Activated T-helper 1 cell treated with anti-CD3 and anti-CD28 coated beads, Interleukin-12 subunit alpha, Interleukin-12 subunit beta, Interleukin-2, Interleukin-4 antibody, amounts not matched to agents 30 ng/mL and 10 ng/mL and 1 ng/mL, durations not matched to agents 14 hours and 24 hours and 36 hours (primary cell): ENCODE measurements at regions of chr20 and their contacts with region 1.

Region 1: DNA sequence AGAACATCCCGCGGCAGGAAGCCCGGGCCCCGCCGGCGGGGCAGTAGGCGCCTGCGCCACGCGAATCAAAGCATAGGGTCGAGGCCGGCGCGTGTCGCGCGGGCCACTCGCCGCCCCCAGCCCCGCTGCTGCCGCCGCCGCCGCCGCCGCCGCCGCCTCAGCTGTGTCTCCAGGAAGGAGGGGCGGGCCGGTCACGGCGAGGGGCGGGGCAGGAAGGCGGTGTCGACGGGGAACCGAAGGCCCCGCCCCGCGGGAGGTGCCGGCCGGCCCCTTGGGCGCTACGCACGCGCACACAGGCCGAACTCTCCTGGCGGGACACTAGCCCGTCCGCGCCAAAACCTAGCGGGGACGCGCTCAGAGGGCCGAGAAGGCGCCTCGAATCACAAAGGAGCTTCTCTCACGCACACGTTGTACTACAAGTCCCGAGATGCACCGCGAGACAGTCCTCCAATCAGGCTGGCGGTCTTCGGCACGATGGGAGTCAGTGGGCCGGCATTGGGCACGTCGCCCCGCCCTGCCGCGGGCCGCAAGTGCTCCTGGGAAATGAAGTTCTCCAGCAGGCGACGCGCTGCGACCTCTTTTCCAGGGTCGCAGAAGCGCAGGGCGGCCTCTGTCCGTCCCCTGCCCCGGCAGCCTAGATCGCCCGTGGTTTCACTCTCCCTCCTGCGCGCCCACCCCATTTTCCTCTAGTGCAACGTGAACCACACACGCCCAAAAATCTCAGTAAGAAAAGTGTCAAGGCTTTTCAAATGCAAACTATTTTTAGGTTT is at the start of gene RALGAPA2:
- DNase-seq: peak; percentile 91
- H3K4me3 Mint-ChIP-seq: peak within 1 kb of the TSS; percentile 95
- H3K27ac Mint-ChIP-seq: peak within 1 kb of the TSS; percentile 89
- H3K4me1 Mint-ChIP-seq: peaks cover 33% of the 10 kb centered on the region
- H3K27me3 Mint-ChIP-seq: no peaks in the 10 kb centered on the region
- total RNA-seq, gene RALGAPA2: 18.0 and 19.6 TPM in 2 replicates

Region 2: DNA sequence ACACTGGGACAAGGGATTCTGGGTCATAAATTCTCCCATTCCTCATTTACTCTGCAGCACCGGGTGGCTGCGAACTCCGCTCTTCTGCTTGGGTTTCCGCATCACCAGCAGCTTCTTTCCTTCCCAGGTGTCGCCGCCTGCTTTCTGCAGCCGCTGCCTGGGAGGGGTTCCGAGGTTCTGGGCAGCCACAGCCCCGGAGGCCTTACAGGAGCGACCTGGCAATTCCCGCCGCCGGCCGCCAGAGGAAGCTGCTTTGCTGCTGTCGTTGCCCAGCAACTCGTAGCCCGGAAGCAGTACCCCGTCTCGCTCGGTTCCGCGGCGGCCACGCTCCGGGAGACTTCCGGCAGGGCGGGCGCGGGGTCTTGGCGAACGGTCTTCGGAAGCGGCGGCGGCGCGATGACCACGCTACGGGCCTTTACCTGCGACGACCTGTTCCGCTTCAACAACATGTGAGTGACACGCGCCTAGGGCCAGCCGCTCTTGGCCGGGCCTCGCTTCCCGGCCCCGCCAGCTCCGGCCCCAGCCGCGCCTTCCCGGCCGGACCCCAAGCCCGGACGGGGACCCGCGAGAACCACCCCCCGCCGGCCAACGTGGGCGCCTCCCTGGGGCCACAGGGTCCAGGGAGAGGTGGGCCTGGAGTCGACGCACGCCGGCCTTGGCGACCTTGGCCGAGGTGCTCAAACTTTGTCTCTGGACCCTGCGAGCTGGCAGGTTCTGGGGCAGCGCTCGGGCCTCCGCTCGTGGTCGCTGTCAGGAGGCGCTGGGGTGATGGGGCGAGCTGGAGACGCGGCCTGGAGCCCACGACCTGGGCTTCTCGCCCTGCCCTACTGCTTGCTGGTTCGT is 695.4 kb before region 1 on chr20 and contains the start of gene NAA20:
- intact Hi-C with region 1: loop called (anchors 2 kb)
- DNase-seq: peak; percentile 88
- H3K4me3 Mint-ChIP-seq: peak within 1 kb of the TSS; percentile 90
- H3K27ac Mint-ChIP-seq: peak within 1 kb of the TSS; percentile 86
- H3K4me1 Mint-ChIP-seq: peaks cover 44% of the 10 kb centered on the region
- H3K27me3 Mint-ChIP-seq: no peaks in the 10 kb centered on the region
- total RNA-seq, gene NAA20: 86.3 and 89.9 TPM in 2 replicates

Region 3: GRCh38 chr20:20052074-20052970 is 660.3 kb before region 1 on chr20 and contains the starts of genes CFAP61 and CRNKL1:
- intact Hi-C with region 1: loop called (anchors 1 kb)
- DNase-seq: peak; percentile 95
- H3K4me3 Mint-ChIP-seq: peak within 1 kb of the TSS; percentile 97
- H3K27ac Mint-ChIP-seq: peak within 1 kb of the TSS; percentile 96
- H3K4me1 Mint-ChIP-seq: peaks cover 13% of the 10 kb centered on the region
- H3K27me3 Mint-ChIP-seq: peaks cover 6% of the 10 kb centered on the region
- total RNA-seq, gene CFAP61: not detected in 2 replicates
- total RNA-seq, gene CRNKL1: 23.9 and 24.1 TPM in 2 replicates

Region 4: DNA sequence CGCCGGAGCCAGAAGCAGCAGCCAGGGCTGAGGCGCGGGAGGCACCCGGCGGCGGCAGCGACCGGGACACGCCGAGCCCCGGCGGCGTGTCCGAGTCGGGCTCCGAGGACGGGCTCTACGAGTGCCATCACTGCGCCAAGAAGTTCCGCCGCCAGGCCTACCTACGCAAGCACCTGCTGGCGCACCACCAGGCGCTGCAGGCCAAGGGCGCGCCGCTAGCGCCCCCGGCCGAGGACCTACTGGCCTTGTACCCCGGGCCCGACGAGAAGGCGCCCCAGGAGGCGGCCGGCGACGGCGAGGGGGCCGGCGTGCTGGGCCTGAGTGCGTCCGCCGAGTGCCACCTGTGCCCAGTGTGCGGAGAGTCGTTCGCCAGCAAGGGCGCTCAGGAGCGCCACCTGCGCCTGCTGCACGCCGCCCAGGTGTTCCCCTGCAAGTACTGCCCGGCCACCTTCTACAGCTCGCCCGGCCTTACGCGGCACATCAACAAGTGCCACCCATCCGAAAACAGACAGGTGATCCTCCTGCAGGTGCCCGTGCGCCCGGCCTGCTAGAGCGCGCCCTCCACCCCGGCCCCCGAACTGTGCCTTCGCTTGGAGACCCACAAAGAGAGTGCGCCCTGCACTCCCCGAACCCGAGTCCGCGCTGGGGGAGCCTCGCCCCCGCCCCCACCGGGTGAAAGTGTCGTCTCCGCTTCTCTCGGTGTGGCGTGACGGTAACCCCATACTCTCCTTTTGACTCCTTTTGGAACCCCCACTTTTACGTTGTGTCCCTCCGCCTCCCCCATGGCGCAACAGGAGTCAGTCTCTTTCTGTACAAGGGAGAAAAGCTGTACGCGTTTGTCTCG is 343.2 kb before region 1 on chr20:
- intact Hi-C with region 1: loop called (anchors 5 kb)
- DNase-seq: no peak
- H3K4me3 Mint-ChIP-seq: peak overlapping the region; percentile 88
- H3K27ac Mint-ChIP-seq: peak overlapping the region; percentile 89
- H3K4me1 Mint-ChIP-seq: peaks cover 28% of the 10 kb centered on the region
- H3K27me3 Mint-ChIP-seq: peaks cover 60% of the 10 kb centered on the region

Region 5: GRCh38 chr20:20452254-20452676 is 260.4 kb before region 1 on chr20:
- intact Hi-C with region 1: loop called (anchors 2 kb)
- DNase-seq: peak; percentile 43
- H3K4me3 Mint-ChIP-seq: peak overlapping the region; percentile 89
- H3K27ac Mint-ChIP-seq: peak overlapping the region; percentile 91
- H3K4me1 Mint-ChIP-seq: peaks cover 54% of the 10 kb centered on the region
- H3K27me3 Mint-ChIP-seq: no peaks in the 10 kb centered on the region

Region 6: DNA sequence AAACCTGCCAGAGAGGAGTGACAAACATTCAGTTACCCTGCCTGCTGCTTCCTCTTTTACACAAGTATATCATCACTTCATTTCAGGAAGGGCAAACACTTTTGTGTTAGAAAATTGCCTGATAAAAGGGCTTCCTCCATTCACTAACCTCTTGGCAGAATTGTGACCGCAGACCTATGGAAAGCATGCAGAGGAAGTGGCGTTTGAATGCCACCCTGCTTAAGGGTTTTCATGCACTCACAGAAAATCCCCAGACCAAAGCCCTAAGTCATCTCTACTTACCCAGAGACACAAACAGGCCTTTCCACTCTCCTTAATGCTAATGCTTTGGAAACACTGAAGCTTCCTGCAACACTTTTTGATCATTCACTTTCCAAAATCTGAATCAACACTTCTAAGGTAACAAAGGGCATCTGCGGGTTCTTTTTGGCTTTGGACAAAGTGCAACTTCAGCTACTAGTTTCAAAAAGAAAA is 21.9 kb after region 1 on chr20:
- intact Hi-C with region 1: loop called (anchors 2 kb)
- DNase-seq: no peak
- H3K4me3 Mint-ChIP-seq: no peak overlapping the region
- H3K27ac Mint-ChIP-seq: peak overlapping the region; percentile 7
- H3K4me1 Mint-ChIP-seq: peaks cover 11% of the 10 kb centered on the region
- H3K27me3 Mint-ChIP-seq: peaks cover 7% of the 10 kb centered on the region